ENCODE measurements at regions of chr18 and their contacts with region 1.

Region 1: DNA sequence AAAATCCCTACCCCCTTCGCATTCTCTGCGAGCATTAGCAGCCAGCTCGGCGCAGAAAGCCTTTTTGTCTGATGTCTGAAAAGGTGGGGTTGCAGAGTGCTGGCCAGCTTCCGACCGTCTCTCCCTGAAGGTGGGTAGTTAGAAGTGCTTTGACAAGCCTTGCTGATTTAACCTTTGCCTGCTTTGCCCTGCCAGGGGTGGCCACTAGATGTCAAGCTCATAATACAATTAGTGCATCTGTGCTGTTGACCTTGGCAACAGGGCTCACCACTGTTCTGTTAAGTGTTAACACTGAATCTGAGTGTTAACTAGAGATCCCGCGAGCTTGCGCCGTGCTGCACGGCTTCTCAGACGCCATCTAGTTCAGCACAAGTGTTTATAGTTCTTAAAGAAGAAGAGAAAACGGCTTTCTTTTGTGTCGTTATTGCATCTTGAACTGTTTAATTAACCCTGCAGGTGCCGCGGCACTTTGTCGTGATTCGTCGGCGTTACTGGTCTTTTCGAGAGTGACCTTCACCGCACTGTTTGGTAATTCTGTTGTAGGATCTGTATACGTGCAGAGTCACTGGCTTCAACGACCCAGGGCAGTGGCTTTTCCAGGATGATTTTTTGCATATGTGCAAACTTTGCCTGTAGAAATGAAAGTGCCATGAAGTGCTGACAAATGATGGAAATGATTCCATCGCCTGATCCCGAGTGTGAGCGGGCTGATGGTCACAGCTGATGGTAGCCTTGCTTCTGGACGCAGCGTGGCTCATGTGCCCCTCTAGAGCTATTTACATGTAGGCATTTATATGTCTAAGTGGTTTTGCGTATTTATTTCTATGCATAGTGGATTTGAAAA is 5.5 kb downstream of the SALL3 start:
- ATAC-seq: peak; percentile 58 to 76 (median 66)
- H3K4me3 ChIP-seq: peak overlapping the region; percentile 5 to 27 (median 19)
- H3K27ac ChIP-seq: no peak overlapping the region
- H3K4me1 ChIP-seq: peaks cover 6 to 9% of the 10 kb centered on the region in 2 donors

Region 2: DNA sequence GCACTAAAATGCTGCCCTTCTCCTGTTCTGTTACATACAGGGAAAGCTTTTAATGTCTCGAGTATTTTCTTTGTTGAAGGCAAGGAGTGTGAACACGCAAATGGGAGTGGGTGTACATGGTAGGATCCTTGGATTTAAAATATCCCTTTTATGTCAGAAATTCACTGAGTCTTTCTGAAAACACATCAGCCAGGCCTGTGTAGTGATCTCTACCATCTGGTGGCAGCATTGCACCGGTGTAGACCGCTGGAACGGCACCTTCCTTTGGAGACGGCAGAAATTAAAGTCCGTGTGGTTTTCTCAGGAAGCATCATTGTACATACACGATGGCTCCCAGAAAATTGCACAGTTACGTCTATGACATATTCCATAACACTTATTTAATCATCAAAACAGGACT is 1219.7 kb before region 1 on chr18:
- in situ Hi-C with region 1: loop called in 4 of 9 experiments (anchors 10 to 25 kb)
- ATAC-seq: peak; percentile 56 to 90 (median 82)
- H3K4me3 ChIP-seq: no peak overlapping the region
- H3K27ac ChIP-seq: no peak overlapping the region
- H3K4me1 ChIP-seq: peaks cover 7 to 10% of the 10 kb centered on the region in 2 donors

Region 3: GRCh38 chr18:77772177-77772576 is 1213.0 kb before region 1 on chr18:
- in situ Hi-C with region 1: loop called in 4 of 9 experiments (anchors 10 to 25 kb)
- ATAC-seq: peak in 6 of 8 experiments; percentile 29 to 83 (median 40)
- H3K4me3 ChIP-seq: no peak overlapping the region
- H3K27ac ChIP-seq: no peak overlapping the region
- H3K4me1 ChIP-seq: no peaks in the 10 kb centered on the region

Region 4: GRCh38 chr18:77899972-77900754 is 1085.0 kb before region 1 on chr18:
- in situ Hi-C with region 1: loop called in 1 of 9 experiments (anchors 25 kb)
- ATAC-seq: peak; percentile 64 to 100 (median 96)
- H3K4me3 ChIP-seq: peak overlapping the region; percentile 24 to 42 (median 33)
- H3K27ac ChIP-seq: no peak overlapping the region
- H3K4me1 ChIP-seq: peaks cover 3 to 10% of the 10 kb centered on the region in 2 donors

Region 5: DNA sequence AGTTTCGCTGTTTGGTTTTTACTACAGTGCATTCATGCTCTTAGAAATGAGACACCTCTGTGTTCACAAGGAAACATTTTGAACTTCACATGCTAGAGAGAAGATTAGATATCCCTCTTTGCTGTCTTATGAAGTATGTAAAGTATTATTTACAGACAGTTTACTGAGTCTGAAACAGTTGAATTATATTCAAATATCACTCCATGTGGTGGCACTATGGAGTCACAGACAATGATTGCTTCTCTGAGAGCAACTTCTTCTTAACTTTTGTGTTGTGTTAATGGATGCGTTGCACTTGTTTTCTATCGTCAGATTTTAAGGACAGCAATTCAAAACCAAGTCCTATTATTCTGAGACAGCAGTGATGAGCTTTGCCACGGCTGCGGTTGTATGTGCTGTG is 911.9 kb before region 1 on chr18:
- in situ Hi-C with region 1: loop called in 2 of 9 experiments (anchors 10 to 25 kb)
- ATAC-seq: no peak
- H3K4me3 ChIP-seq: no peak overlapping the region
- H3K27ac ChIP-seq: no peak overlapping the region
- H3K4me1 ChIP-seq: peaks cover 0 to 18% of the 10 kb centered on the region in 2 donors

Measured in motor neuron (in vitro differentiated cells).